ENCODE measurements at regions of chr10 and their contacts with region 1.

Region 1: GRCh38 chr10:18713077-18713476 is 53.8 kb downstream of the ARL5B start:
- DNase-seq: peak; percentile 92
- ATAC-seq: peak; percentile 87
- H3K4me3 ChIP-seq: no peak overlapping the region
- H3K27ac ChIP-seq: no peak overlapping the region
- H3K4me1 ChIP-seq: 0 out of 2 replicates have a peak, but pooled peaks cover 1% of the 10 kb centered on the region
- H3K27me3 ChIP-seq: no peaks in the 10 kb centered on the region; the same call in 1 of the 2 replicates
- CTCF ChIP-seq: no peak
- POLR2A ChIP-seq: no peak
- RAD21 ChIP-seq: no peak

Region 2: DNA sequence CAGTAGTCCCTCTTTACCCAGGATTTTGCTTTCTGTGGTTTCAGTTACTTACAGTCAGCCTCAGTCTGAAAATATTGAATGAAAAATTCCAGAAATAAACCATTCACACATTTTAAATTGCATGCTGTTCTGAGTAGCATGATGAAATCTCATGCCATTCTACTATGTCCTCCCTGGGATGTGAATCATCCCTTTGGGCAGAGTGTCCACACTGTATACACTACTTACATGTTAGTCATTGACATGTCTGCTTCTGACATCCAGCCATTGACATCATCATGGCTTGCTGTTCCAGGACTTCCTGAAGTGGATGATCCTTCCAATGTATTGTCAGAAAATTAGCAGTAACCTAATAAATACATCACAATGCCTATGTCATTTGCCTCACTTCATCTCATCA is 301.0 kb after region 1 on chr10:
- CTCF ChIA-PET with region 1: no interaction called
- POLR2A ChIA-PET with region 1: no interaction called
- dilution Hi-C with region 1: no loop called
- in situ Hi-C with region 1: no loop called
- intact Hi-C with region 1: loop called (anchors 10 kb)
- DNase-seq: peak; percentile 97
- ATAC-seq: peak; percentile 97
- H3K4me3 ChIP-seq: no peak overlapping the region
- H3K27ac ChIP-seq: no peak overlapping the region
- H3K4me1 ChIP-seq: no peaks in the 10 kb centered on the region; the same call in 1 of the 2 replicates
- H3K27me3 ChIP-seq: no peaks in the 10 kb centered on the region
- CTCF ChIP-seq: no peak
- POLR2A ChIP-seq: no peak
- RAD21 ChIP-seq: no peak

Region 3: GRCh38 chr10:19738440-19738839 is 1025.4 kb after region 1 on chr10:
- CTCF ChIA-PET with region 1: no interaction called
- POLR2A ChIA-PET with region 1: no interaction called
- dilution Hi-C with region 1: no loop called
- in situ Hi-C with region 1: no loop called
- intact Hi-C with region 1: no loop called
- DNase-seq: no peak
- ATAC-seq: no peak
- H3K4me3 ChIP-seq: no peak overlapping the region
- H3K27ac ChIP-seq: no peak overlapping the region
- H3K4me1 ChIP-seq: no peaks in the 10 kb centered on the region
- H3K27me3 ChIP-seq: no peaks in the 10 kb centered on the region
- CTCF ChIP-seq: no peak
- POLR2A ChIP-seq: no peak
- RAD21 ChIP-seq: no peak